ENCODE measurements at regions of chr19 and their contacts with region 1.

Region 1: GRCh38 chr19:52028027-52028779 is at the start of gene ZNF614:
- DNase-seq: peak; percentile 71 to 94
- H3K4me3 ChIP-seq: peak within 1 kb of the TSS; percentile 81 to 96
- H3K27ac ChIP-seq: peak within 1 kb of the TSS; percentile 94 to 98
- H3K4me1 ChIP-seq: peaks cover 0 to 5% of the 10 kb centered on the region in 2 donors
- H3K27me3 ChIP-seq: no peaks in the 10 kb centered on the region
- CTCF ChIP-seq: no peak
- total RNA-seq, gene ZNF614: 1.7 TPM

Region 2: DNA sequence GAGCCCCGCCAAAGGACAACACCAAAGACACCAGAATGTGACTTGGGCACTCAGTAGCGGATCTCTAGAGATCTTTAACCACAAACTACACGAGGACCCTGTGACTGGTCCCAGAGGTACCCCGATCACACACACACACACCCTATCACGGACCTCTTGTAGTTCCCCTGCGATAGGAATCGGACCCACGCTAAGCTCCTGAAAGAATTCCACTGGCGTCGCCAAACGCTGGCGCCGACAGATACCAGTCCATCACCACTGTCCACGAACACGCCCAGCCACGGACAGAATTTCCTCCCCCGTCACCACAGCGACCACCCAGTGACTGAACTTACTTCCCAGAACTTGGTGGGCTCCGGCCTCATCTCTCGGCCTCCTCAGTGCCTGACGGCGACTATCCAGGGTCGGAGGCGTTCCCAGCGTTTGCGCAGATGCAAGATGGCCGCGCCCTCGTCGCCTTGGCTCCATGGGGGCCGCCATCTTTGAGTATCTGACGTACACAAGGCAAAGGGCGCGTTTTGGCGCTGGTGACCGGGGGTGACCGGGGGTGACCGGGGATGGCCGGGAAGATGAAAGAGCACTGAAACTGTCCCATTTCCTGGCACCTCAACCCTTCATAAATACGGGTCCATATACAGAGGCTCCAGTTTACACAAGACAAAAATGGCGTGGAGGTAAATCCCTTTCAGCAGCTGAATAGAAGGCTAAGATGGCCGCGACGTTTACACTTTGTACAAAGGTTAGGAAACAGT is 20.2 kb before region 1 on chr19 and contains the start of gene ZNF615:
- intact Hi-C with region 1: loop called (anchors 2 kb)
- DNase-seq: peak; percentile 53 to 93
- H3K4me3 ChIP-seq: peak within 1 kb of the TSS; percentile 68 to 77
- H3K27ac ChIP-seq: peak within 1 kb of the TSS; percentile 73 to 83
- H3K4me1 ChIP-seq: peaks cover 0 to 5% of the 10 kb centered on the region in 2 donors
- H3K27me3 ChIP-seq: no peaks in the 10 kb centered on the region
- CTCF ChIP-seq: no peak
- total RNA-seq, gene ZNF615: 11.7 TPM

Region 3: GRCh38 chr19:52048555-52049501 is 20.6 kb after region 1 on chr19 and contains the start of gene ZNF432:
- intact Hi-C with region 1: loop called (anchors 1 kb)
- DNase-seq: peak; percentile 78 to 97
- H3K4me3 ChIP-seq: peak within 1 kb of the TSS; percentile 59 to 69
- H3K27ac ChIP-seq: peak within 1 kb of the TSS; percentile 90 to 95
- H3K4me1 ChIP-seq: no peaks in the 10 kb centered on the region
- H3K27me3 ChIP-seq: no peaks in the 10 kb centered on the region
- CTCF ChIP-seq: no peak
- total RNA-seq, gene ZNF432: 6.1 TPM

Region 4: DNA sequence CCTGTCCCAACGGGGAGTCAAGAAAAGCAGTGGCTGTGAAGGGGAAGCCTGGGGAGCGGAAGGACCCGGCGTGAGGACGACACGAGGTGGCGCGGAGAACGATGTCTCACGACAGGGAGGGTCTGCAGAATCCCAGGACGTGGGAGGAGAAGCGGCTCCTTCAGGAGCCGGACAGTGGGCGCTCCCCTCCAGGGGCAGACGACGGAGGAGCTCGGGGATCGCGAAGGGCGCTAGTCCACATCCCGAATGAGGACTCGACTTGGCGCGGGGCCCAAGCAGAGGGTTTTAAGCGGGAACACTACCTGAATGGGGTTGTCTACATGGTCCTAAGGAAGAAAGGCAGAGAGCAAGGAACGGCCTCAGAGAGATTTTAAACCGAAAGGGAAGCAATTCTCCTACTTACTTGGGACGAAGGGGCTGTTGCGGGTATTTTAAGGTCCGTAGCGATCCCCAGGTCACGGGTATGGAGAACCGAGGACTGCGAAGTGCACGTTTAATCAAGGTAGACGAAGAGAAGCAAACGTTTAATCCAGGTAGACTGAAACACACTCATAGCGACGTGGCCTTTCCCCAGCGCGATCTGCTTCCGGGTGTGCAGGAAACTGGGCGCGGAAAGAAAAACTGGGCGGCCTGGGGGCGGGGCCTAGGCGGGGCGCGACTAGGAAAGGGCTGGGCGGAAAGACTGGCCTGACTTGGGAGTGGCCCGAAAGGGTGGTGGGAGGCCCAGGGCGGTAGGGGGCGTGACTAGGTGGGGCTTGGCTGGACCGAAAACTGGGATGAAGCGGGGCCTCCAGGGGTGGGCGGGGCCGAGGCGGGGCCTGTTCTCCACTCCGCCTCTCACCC is 67.2 kb after region 1 on chr19 and contains the start of gene ZNF841:
- intact Hi-C with region 1: loop called (anchors 2 kb)
- DNase-seq: peak; percentile 85 to 97
- H3K4me3 ChIP-seq: peak within 1 kb of the TSS; percentile 91 to 95
- H3K27ac ChIP-seq: peak within 1 kb of the TSS; percentile 75 to 87
- H3K4me1 ChIP-seq: no peaks in the 10 kb centered on the region
- H3K27me3 ChIP-seq: no peaks in the 10 kb centered on the region
- CTCF ChIP-seq: no peak
- total RNA-seq, gene ZNF841: 6.9 TPM